Activated naive CD4-positive, alpha-beta T cell treated with anti-CD3 and anti-CD28 coated beads for 36 hours (primary cell): ENCODE measurements at regions of chr2 and their contacts with region 1.

Region 1: DNA sequence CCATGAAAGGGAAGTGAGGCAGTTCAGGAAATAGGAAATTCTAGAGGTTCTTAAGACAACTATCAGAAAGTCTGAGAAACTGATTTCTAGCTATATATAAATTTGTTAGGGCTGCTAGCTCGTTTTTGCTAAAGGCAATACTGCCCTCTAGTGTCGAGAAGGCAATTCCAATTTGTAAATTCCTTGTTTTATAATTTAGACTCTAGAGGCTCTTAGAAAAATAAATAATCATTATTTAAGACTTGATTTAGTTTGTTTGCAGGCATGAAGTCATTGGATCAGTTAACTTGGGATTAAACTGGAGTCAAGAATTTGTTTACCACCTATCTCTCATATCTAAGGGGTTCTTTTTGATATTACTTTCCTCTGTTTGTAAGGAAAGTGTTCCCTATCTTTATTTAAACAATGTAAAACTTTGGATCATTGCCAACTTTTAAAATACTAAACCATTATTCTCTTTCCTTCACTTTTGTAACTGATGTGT is 66.2 kb downstream of the ACVR2A start:
- DNase-seq: peak; percentile 55
- H3K4me3 Mint-ChIP-seq: no peak overlapping the region
- H3K27ac Mint-ChIP-seq: no peak overlapping the region
- H3K4me1 Mint-ChIP-seq: peaks cover 3% of the 10 kb centered on the region
- H3K27me3 Mint-ChIP-seq: no peaks in the 10 kb centered on the region

Region 2: DNA sequence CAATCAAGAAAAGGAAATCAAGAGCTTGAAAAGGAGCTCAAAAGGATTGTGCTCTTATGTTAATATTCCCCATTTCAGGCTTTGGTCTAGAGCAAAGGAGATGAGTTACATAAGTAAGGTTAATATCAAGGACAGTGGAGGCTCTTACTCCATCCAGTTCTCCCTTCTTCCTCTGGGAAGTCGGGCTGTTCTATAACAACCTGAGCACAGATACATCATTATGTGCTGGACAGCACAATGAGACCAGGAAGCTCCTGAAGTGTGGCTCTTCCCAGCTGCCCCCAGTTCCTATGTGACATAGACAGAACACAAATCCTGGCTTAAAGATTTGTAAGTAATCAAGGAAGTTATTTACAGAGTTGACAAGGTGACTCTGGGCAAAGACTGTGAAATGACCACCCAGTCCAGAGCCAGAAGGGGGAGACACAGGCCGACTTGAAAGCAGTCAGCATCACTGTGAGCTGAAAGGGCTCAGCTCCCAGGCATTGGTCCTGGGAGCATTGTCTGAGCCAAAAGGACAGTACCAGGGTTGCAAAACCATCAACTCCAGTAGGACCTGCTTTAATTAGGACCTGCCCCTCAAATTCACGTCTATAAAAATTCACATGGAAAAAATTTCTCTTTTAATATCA is 983.8 kb before region 1 on chr2:
- CTCF ChIA-PET with region 1: no interaction called
- intact Hi-C with region 1: loop called (anchors 5 kb)
- DNase-seq: peak; percentile 9
- H3K4me3 Mint-ChIP-seq: no peak overlapping the region
- H3K27ac Mint-ChIP-seq: no peak overlapping the region
- H3K4me1 Mint-ChIP-seq: no peaks in the 10 kb centered on the region
- H3K27me3 Mint-ChIP-seq: no peaks in the 10 kb centered on the region

Region 3: GRCh38 chr2:147082850-147083522 is 828.0 kb before region 1 on chr2:
- CTCF ChIA-PET with region 1: interaction called, 19 read pairs
- intact Hi-C with region 1: loop called (anchors 1 kb)
- DNase-seq: peak; percentile 74
- H3K4me3 Mint-ChIP-seq: no peak overlapping the region
- H3K27ac Mint-ChIP-seq: no peak overlapping the region
- H3K4me1 Mint-ChIP-seq: peaks cover 3% of the 10 kb centered on the region
- H3K27me3 Mint-ChIP-seq: peaks cover 9% of the 10 kb centered on the region

Region 4: GRCh38 chr2:147242445-147242844 is 668.6 kb before region 1 on chr2:
- CTCF ChIA-PET with region 1: no interaction called
- intact Hi-C with region 1: no loop called
- DNase-seq: no peak
- H3K4me3 Mint-ChIP-seq: no peak overlapping the region
- H3K27ac Mint-ChIP-seq: no peak overlapping the region
- H3K4me1 Mint-ChIP-seq: no peaks in the 10 kb centered on the region
- H3K27me3 Mint-ChIP-seq: peaks cover 6% of the 10 kb centered on the region

Region 5: DNA sequence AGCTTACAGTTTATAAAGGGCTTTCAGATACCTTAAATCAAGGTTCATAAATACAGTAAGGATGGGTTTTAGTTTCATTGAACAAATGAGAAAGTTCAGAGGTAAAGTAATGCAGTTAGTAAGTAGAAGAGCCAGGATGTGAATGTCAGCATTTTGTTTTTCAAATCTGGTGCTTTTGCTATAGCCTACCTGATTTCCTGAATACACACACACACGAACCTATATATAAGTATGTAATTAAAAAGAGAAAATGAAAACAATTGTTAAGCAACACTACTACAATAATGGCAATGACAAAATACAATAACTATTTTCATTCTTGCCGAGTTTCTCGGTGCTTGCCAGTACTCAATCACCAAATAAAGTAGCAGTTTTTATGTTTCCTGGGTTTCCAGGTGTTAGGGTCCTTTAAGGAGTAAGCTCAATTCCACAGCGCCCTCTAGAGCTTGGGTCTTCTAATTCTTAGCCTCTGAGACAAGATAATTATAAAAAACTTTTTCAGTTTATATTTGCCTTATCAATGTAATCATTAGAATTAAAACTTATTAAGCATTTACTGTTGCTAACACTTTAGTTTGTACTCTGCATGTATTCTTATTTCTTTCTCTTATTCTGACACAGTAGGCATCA is 579.1 kb before region 1 on chr2:
- CTCF ChIA-PET with region 1: interaction called, 3 read pairs
- intact Hi-C with region 1: loop called (anchors 2 kb)
- DNase-seq: peak; percentile 68
- H3K4me3 Mint-ChIP-seq: no peak overlapping the region
- H3K27ac Mint-ChIP-seq: no peak overlapping the region
- H3K4me1 Mint-ChIP-seq: peaks cover 13% of the 10 kb centered on the region
- H3K27me3 Mint-ChIP-seq: no peaks in the 10 kb centered on the region

Region 6: GRCh38 chr2:147739508-147739907 is 171.5 kb before region 1 on chr2:
- CTCF ChIA-PET with region 1: no interaction called
- intact Hi-C with region 1: loop called (anchors 5 kb)
- DNase-seq: no peak
- H3K4me3 Mint-ChIP-seq: no peak overlapping the region
- H3K27ac Mint-ChIP-seq: no peak overlapping the region
- H3K4me1 Mint-ChIP-seq: no peaks in the 10 kb centered on the region
- H3K27me3 Mint-ChIP-seq: no peaks in the 10 kb centered on the region

Region 7: GRCh38 chr2:147977679-147978078 is 66.6 kb after region 1 on chr2:
- CTCF ChIA-PET with region 1: no interaction called
- intact Hi-C with region 1: no loop called
- DNase-seq: no peak
- H3K4me3 Mint-ChIP-seq: no peak overlapping the region
- H3K27ac Mint-ChIP-seq: no peak overlapping the region
- H3K4me1 Mint-ChIP-seq: peaks cover 20% of the 10 kb centered on the region
- H3K27me3 Mint-ChIP-seq: no peaks in the 10 kb centered on the region